ENCODE measurements at regions of chr4 and their contacts with region 1.

Region 1: GRCh38 chr4:104677116-104677515 is 182.4 kb upstream of the CXXC4 start:
- DNase-seq: peak; percentile 3
- H3K4me3 Mint-ChIP-seq: no peak overlapping the region
- H3K27ac Mint-ChIP-seq: no peak overlapping the region
- H3K4me1 Mint-ChIP-seq: no peaks in the 10 kb centered on the region
- H3K27me3 Mint-ChIP-seq: no peaks in the 10 kb centered on the region
- CTCF ChIP-seq: no peak

Region 2: DNA sequence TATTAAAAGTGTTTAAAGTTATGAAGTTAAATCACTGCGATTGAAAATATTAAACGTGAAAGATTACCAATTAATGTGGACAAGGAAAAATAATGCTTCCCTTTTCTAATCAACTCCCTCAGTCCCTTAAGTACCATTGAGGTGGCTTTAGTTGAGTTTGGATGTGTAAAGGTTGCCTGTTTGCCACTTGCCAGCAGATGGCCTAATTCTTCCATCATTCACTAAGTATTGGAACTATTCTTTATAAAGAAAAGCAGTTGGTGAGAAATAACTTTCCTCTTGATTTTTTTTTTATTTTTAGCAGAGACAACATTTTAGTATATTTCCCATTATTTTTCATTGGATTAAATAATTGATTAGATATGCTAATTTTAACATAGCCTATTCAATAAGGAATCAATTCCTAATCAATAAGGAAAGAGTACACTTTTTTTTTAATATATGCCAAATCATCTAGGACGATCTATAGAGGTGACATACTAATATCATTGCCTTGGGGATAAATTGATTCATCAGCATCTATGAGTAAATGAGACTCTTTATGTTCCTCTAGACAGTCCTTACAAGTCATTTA is 661.3 kb before region 1 on chr4:
- CTCF ChIA-PET with region 1: no interaction called
- intact Hi-C with region 1: loop called (anchors 10 kb)
- DNase-seq: no peak
- H3K4me3 Mint-ChIP-seq: no peak overlapping the region
- H3K27ac Mint-ChIP-seq: no peak overlapping the region
- H3K4me1 Mint-ChIP-seq: no peaks in the 10 kb centered on the region
- H3K27me3 Mint-ChIP-seq: no peaks in the 10 kb centered on the region
- CTCF ChIP-seq: no peak

Measured in Calu3 (cell line).